CD8-positive, alpha-beta memory T cell (primary cell): ENCODE measurements at regions of chr14 and their contacts with region 1.

Region 1: GRCh38 chr14:64510825-64511671 is 6.5 kb downstream of the ZBTB1 start:
- DNase-seq: peak; percentile 55 to 77 (median 63)
- H3K4me3 ChIP-seq: peak overlapping the region; percentile 33
- H3K4me3 Mint-ChIP-seq: peak overlapping the region; percentile 25 to 58 (median 44)
- H3K27ac ChIP-seq: peak overlapping the region; percentile 40
- H3K27ac Mint-ChIP-seq: peak overlapping the region; percentile 69 to 97 (median 86)
- H3K4me1 ChIP-seq: peaks cover 80% of the 10 kb centered on the region
- H3K4me1 Mint-ChIP-seq: peaks cover 86 to 98% (median 97%) of the 10 kb centered on the region in 3 donors
- H3K27me3 ChIP-seq: no peaks in the 10 kb centered on the region
- H3K27me3 Mint-ChIP-seq: no peaks in the 10 kb centered on the region

Region 2: DNA sequence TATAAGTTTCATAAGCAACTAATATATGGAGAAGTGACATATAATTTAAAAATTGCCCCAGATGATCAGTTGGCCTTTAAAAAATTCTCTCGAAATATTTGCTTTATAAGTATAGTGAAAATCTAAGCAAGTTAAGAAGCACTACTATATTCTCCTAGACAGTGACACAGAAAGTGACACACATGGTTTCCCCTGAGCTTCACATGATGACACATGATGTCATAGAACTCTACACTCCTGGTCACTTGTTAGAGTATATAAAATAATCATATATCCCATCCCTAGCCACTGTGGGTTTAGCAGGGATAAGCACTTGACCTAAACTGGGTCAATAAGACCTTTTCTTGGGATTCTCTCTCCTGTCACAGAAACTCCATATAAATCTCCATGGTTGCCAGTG is 165.5 kb before region 1 on chr14:
- CTCF ChIA-PET with region 1: interaction called, 10 read pairs
- POLR2A ChIA-PET with region 1: no interaction called
- DNase-seq: no peak
- H3K4me3 ChIP-seq: no peak overlapping the region
- H3K4me3 Mint-ChIP-seq: no peak overlapping the region
- H3K27ac ChIP-seq: no peak overlapping the region
- H3K27ac Mint-ChIP-seq: no peak overlapping the region
- H3K4me1 ChIP-seq: no peaks in the 10 kb centered on the region
- H3K4me1 Mint-ChIP-seq: no peaks in the 10 kb centered on the region
- H3K27me3 ChIP-seq: no peaks in the 10 kb centered on the region
- H3K27me3 Mint-ChIP-seq: peaks cover 0 to 1% of the 10 kb centered on the region in 2 donors

Region 3: GRCh38 chr14:64478634-64479250 is 32.3 kb before region 1 on chr14:
- CTCF ChIA-PET with region 1: interaction called, 17 read pairs
- POLR2A ChIA-PET with region 1: no interaction called
- DNase-seq: peak in 2 of 5 donors; percentile 11 to 15
- H3K4me3 ChIP-seq: no peak overlapping the region
- H3K4me3 Mint-ChIP-seq: no peak overlapping the region
- H3K27ac ChIP-seq: no peak overlapping the region
- H3K27ac Mint-ChIP-seq: peak overlapping the region in 2 of 8 donors; percentile 13 to 29
- H3K4me1 ChIP-seq: no peaks in the 10 kb centered on the region
- H3K4me1 Mint-ChIP-seq: peaks cover 6 to 35% (median 23%) of the 10 kb centered on the region in 3 donors
- H3K27me3 ChIP-seq: no peaks in the 10 kb centered on the region
- H3K27me3 Mint-ChIP-seq: no peaks in the 10 kb centered on the region

Region 4: DNA sequence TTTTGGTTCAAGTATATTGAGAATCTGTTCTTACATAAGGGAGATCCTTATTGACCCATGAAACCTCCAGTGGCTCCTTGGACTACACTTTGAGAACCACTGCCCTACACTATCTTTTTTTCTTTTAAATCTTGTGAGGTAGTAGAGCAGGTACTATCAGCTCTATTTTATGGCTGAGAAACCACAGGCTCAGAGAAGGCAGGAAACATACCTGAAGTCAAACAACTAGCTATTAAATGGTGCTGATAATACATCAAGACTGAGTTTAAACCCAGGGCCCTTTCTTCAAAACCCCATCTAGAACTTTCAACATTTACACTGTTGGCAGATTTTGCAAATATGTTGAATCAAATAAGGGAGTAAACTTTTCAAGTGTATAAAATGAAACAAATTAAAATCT is 14.3 kb before region 1 on chr14:
- CTCF ChIA-PET with region 1: interaction called, 28 read pairs
- POLR2A ChIA-PET with region 1: interaction called, 13 read pairs
- DNase-seq: no peak
- H3K4me3 ChIP-seq: no peak overlapping the region
- H3K4me3 Mint-ChIP-seq: peak overlapping the region; percentile 7 to 60 (median 39)
- H3K27ac ChIP-seq: no peak overlapping the region
- H3K27ac Mint-ChIP-seq: peak overlapping the region in 7 of 8 donors; percentile 51 to 81 (median 68)
- H3K4me1 ChIP-seq: peaks cover 69% of the 10 kb centered on the region
- H3K4me1 Mint-ChIP-seq: peaks cover 64 to 89% (median 88%) of the 10 kb centered on the region in 3 donors
- H3K27me3 ChIP-seq: no peaks in the 10 kb centered on the region
- H3K27me3 Mint-ChIP-seq: no peaks in the 10 kb centered on the region